ENCODE measurements at regions of chr6 and their contacts with region 1.

Region 1: GRCh38 chr6:8219352-8219943 is 117.1 kb upstream of the EEF1E1 start:
- DNase-seq: peak; percentile 65
- H3K4me3 Mint-ChIP-seq: no peak overlapping the region
- H3K27ac Mint-ChIP-seq: no peak overlapping the region
- H3K4me1 Mint-ChIP-seq: no peaks in the 10 kb centered on the region
- H3K27me3 Mint-ChIP-seq: no peaks in the 10 kb centered on the region
- CTCF ChIP-seq: peak; percentile 72

Region 2: GRCh38 chr6:7725849-7726415 is 493.5 kb before region 1 on chr6 and contains the start of gene BMP6:
- CTCF ChIA-PET with region 1: interaction called, 4 read pairs
- POLR2A ChIA-PET with region 1: no interaction called
- intact Hi-C with region 1: loop called (anchors 1 kb)
- DNase-seq: peak; percentile 90
- H3K4me3 Mint-ChIP-seq: peak within 1 kb of the TSS; percentile 79
- H3K27ac Mint-ChIP-seq: no peak within 1 kb of the TSS
- H3K4me1 Mint-ChIP-seq: peaks cover 8% of the 10 kb centered on the region
- H3K27me3 Mint-ChIP-seq: peaks cover 53% of the 10 kb centered on the region
- CTCF ChIP-seq: no peak
- total RNA-seq, gene BMP6: 0.12 and 0.56 TPM in 2 replicates

Region 3: GRCh38 chr6:8123236-8123635 is 96.2 kb before region 1 on chr6:
- CTCF ChIA-PET with region 1: interaction called, 321 read pairs
- POLR2A ChIA-PET with region 1: no interaction called
- intact Hi-C with region 1: no loop called
- DNase-seq: no peak
- H3K4me3 Mint-ChIP-seq: no peak overlapping the region
- H3K27ac Mint-ChIP-seq: no peak overlapping the region
- H3K4me1 Mint-ChIP-seq: no peaks in the 10 kb centered on the region
- H3K27me3 Mint-ChIP-seq: no peaks in the 10 kb centered on the region
- CTCF ChIP-seq: no peak

Region 4: DNA sequence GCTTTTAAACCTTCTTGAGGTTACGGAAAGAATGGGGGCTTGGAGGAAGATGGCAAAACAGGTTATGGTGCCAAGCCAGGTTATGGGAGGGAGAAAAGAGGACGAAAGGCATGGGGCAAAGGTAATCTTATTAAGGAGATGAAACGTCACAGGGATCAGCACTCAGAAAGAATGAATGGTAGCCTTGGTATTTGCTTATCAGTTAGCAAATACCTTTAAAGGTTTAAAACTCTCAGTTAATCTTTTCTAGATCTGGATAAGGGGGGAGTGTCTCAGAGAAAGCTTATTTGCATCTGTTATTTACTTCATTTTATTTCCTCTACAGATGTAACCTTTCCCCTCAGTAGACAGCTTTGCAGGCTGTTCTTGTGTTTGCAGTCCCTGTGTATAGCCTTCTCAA is 61.6 kb before region 1 on chr6:
- CTCF ChIA-PET with region 1: interaction called, 10 read pairs
- POLR2A ChIA-PET with region 1: no interaction called
- intact Hi-C with region 1: no loop called
- DNase-seq: no peak
- H3K4me3 Mint-ChIP-seq: no peak overlapping the region
- H3K27ac Mint-ChIP-seq: no peak overlapping the region
- H3K4me1 Mint-ChIP-seq: peaks cover 6% of the 10 kb centered on the region
- H3K27me3 Mint-ChIP-seq: no peaks in the 10 kb centered on the region
- CTCF ChIP-seq: no peak

Region 5: DNA sequence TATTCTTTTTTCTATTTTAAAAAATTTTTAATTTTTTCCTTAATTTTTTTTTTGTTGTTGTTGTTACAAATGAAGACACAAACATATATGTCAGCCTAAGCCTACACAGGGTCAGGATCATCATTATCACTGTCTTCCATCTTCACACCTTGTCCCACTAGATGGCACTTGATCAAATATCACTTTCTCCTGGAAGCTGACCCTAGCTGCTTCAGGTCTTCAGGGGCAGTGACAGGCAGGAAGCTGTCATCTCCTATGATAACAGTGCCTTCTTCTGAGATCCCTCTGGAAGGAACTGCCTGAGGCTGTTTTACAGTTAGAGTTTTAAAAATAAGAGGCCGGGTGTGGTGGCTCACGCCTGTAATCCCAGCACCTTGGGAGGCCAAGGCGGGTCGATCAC is 46.9 kb before region 1 on chr6:
- CTCF ChIA-PET with region 1: interaction called, 15 read pairs
- POLR2A ChIA-PET with region 1: no interaction called
- intact Hi-C with region 1: loop called (anchors 1 kb)
- DNase-seq: no peak
- H3K4me3 Mint-ChIP-seq: no peak overlapping the region
- H3K27ac Mint-ChIP-seq: no peak overlapping the region
- H3K4me1 Mint-ChIP-seq: peaks cover 16% of the 10 kb centered on the region
- H3K27me3 Mint-ChIP-seq: no peaks in the 10 kb centered on the region
- CTCF ChIP-seq: no peak

Region 6: DNA sequence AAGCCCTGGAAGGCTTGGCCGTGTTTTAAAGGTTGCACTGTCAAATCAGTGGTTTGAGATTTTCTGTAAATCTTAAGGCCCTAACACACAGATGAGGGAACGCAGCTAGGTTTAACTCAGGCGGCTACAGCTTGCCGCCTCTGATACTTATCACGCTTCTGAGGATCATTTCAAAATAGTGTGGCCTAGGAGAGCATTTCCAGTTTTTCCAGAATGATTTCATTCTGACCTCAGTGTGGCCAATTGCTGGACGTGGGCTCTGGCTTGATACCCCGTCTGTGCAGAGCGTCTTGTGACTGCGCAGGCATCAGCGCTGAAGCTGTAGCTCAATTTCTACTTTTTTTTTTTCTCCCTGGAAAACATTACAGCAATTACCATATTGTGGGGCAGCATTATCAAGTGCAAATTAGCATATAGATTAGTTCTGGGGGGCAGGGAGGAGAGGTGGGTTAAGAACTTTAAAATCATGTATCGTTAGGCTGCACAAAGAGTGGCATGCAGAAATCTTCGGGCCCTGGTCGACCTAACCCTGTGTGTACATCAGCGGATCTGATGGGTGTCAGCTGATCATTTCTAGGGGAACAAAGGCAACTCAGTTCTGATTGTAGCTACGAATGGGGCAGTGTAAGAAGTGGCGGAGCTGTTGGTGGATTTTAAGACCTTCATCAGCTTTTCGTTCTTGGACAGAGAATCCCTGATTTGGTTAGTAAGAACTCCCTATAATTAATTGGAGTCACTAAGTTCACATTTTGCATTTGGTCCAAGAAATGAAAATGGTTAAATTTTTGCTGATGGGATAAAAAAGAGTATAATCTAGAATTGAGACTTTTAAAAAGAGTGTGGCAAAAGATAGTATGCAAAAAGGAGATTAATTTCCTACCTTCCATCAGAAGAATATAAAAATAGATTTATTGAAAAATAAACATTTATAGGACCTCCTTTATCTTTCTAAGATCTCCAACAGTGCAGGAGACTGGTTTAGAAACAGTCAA is 12.0 kb before region 1 on chr6:
- CTCF ChIA-PET with region 1: interaction called, 34 read pairs
- POLR2A ChIA-PET with region 1: interaction called, 4 read pairs
- intact Hi-C with region 1: no loop called
- DNase-seq: no peak
- H3K4me3 Mint-ChIP-seq: no peak overlapping the region
- H3K27ac Mint-ChIP-seq: no peak overlapping the region
- H3K4me1 Mint-ChIP-seq: no peaks in the 10 kb centered on the region
- H3K27me3 Mint-ChIP-seq: no peaks in the 10 kb centered on the region
- CTCF ChIP-seq: no peak

Region 7: GRCh38 chr6:8238761-8239683 is 19.6 kb after region 1 on chr6:
- CTCF ChIA-PET with region 1: interaction called, 12 read pairs
- POLR2A ChIA-PET with region 1: interaction called, 5 read pairs
- intact Hi-C with region 1: no loop called
- DNase-seq: no peak
- H3K4me3 Mint-ChIP-seq: no peak overlapping the region
- H3K27ac Mint-ChIP-seq: no peak overlapping the region
- H3K4me1 Mint-ChIP-seq: peaks cover 11% of the 10 kb centered on the region
- H3K27me3 Mint-ChIP-seq: peaks cover 14% of the 10 kb centered on the region
- CTCF ChIP-seq: no peak

Measured in MCF 10A (cell line).